ENCODE measurements at regions of chr3 and their contacts with region 1.

Region 1: DNA sequence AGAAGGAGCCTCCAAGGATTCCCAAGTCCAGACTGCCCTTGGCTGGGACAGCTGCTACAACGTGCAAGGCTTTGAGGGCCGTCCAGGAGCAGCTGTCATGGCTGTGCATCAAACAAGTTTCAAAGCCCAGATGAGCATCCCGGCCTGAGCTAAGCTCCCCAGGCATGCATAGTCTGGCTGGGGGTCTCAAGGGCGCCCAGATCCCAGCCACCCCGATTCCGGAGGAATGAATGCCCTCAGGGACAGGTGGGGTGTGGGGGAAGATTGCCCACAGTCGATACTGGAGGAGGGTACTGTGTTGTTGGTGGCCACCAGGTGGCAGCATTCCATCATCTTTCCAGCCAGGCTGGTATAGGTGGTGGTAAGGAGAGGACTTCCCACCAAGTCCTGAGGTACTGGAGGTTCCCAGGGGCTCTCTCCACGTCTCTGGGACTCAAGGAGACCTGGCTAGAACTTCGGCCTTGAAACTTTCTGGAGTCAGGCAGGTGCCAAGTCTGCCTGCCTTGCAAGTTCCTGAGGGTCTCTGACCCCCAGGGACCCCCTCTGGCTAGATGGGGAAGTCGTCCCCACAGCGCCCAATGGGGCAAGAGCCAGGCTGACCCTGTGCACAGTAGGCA is 32.8 kb downstream of the RBM5 start:
- DNase-seq: peak; percentile 79
- ATAC-seq: peak; percentile 70
- H3K4me3 ChIP-seq: no peak overlapping the region
- H3K27ac ChIP-seq: no peak overlapping the region
- H3K4me1 ChIP-seq: peaks cover 21% of the 10 kb centered on the region
- H3K27me3 ChIP-seq: no peaks in the 10 kb centered on the region
- CTCF ChIP-seq: peak; percentile 87
- POLR2A ChIP-seq: peak; percentile 26; the same call in 1 of the 2 replicates
- RAD21 ChIP-seq: peak; percentile 95

Region 2: GRCh38 chr3:50154840-50155474 is 33.4 kb after region 1 on chr3 and contains the start of gene SEMA3F:
- CTCF ChIA-PET with region 1: no interaction called
- POLR2A ChIA-PET with region 1: no interaction called
- dilution Hi-C with region 1: no loop called
- in situ Hi-C with region 1: no loop called
- intact Hi-C with region 1: loop called (anchors 1 kb)
- DNase-seq: peak; percentile 56
- ATAC-seq: peak; percentile 83
- H3K4me3 ChIP-seq: peak within 1 kb of the TSS; percentile 45
- H3K27ac ChIP-seq: peak within 1 kb of the TSS; percentile 15; the same call in 1 of the 2 replicates
- H3K4me1 ChIP-seq: peaks cover 22% of the 10 kb centered on the region
- H3K27me3 ChIP-seq: peaks cover 7% of the 10 kb centered on the region; the same call in 1 of the 2 replicates
- CTCF ChIP-seq: peak; percentile 37
- POLR2A ChIP-seq: peak; percentile 57
- RAD21 ChIP-seq: peak; percentile 38
- total RNA-seq, gene SEMA3F: 7.3 and 9.2 TPM in 2 replicates

Region 3: DNA sequence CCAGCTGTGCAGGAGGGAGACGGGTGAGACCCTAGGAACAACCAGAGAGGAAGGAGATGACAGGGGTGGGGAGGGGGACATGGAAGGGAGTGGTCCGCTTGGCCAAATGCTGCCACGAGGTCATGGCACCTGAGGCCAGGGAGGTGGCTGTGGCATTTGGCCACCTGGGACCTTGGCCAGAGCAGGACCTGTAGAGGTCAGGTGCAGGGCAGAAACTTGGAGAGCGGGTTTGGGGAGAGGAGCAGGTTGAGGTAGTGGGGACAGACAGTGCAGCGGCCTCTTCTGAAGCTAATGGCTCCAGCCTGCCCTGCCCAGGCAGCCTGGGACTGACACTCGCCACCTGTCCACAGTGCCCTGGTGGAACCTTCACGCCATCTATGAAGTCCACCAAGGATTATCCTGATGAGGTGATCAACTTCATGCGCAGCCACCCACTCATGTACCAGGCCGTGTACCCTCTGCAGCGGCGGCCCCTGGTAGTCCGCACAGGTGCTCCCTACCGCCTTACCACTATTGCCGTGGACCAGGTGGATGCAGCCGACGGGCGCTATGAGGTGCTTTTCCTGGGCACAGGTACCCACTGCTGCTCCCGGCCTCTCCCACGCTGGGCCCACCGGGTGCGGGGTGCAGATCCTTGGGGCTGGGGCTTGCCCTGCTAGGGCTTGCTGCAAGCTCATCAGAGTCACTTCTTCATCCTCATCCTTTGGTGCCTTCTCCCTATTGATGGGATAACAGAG is 62.9 kb after region 1 on chr3:
- CTCF ChIA-PET with region 1: interaction called, 10 read pairs
- POLR2A ChIA-PET with region 1: no interaction called
- dilution Hi-C with region 1: no loop called
- in situ Hi-C with region 1: loop called (anchors 5 kb)
- intact Hi-C with region 1: loop called (anchors 1 kb)
- DNase-seq: no peak
- ATAC-seq: no peak
- H3K4me3 ChIP-seq: no peak overlapping the region
- H3K27ac ChIP-seq: no peak overlapping the region
- H3K4me1 ChIP-seq: no peaks in the 10 kb centered on the region
- H3K27me3 ChIP-seq: no peaks in the 10 kb centered on the region
- CTCF ChIP-seq: no peak
- POLR2A ChIP-seq: no peak
- RAD21 ChIP-seq: no peak

Region 4: DNA sequence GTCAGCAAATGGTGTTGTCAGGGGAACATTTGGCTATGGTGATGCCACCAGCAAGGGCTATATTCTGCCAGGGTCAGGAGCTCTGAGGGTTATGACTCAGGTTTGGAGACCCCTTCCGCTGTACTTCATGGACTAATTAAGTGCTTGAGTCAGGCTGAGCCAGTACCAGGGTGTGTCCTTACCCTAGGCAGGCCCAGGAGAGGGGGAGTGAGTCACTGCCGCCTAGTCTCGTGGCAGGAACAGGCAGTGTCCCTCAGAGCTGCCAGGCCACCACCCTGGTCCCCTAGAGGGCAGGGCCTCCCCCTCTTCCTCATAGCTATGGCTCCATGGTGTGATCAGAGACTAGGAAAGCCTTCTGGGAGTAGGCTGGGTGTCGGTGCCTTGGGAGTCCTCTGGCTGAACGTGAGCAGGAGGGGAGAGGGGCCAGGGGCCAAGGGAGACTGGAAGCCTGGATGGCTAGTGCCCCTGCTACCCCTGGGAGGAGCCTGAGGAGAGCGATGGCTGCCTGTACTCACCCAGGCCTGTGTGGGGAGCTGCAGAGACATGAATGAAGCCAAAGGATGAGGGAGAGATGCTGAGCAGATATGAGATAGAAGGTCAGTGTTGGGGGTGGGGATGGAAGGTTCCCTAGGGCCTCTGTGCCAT is 506.0 kb after region 1 on chr3:
- CTCF ChIA-PET with region 1: no interaction called
- POLR2A ChIA-PET with region 1: no interaction called
- dilution Hi-C with region 1: no loop called
- in situ Hi-C with region 1: no loop called
- intact Hi-C with region 1: no loop called
- DNase-seq: peak; percentile 69
- ATAC-seq: peak; percentile 83
- H3K4me3 ChIP-seq: no peak overlapping the region
- H3K27ac ChIP-seq: no peak overlapping the region
- H3K4me1 ChIP-seq: peaks cover 6% of the 10 kb centered on the region
- H3K27me3 ChIP-seq: no peaks in the 10 kb centered on the region
- CTCF ChIP-seq: peak; percentile 45
- POLR2A ChIP-seq: no peak
- RAD21 ChIP-seq: peak; percentile 53